ENCODE measurements at regions of chr14 and their contacts with region 1.

Region 1: DNA sequence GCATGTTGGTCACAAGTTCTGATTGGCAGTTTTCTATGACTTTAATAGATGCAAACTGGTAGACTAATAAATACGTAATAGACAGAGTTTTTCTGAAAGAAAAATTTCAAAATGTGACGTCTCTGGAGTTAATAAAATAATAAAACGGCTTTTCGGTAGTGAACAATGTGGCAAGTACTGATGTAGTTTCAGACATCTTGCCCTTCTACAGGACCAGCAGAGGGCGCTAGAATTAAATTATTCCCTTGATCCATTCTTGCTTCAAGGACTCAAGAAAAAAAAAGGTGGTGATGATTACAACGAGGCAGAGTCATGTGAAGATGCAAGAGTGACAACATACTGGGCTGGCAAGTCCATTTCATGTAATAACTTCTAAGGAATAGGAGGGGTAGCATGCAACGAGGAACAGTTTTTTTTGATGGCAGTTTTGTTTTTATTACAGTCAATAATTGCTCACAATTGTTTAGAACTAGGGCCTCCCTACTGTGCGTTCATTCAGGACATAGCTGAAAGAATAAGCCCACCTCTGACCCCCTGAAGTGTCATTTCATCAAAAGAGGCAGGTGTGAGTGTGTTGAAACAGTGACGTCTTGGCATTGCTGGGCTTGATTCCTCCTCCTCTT is 101.0 kb upstream of the GZMB start:
- DNase-seq: peak; percentile 83
- H3K4me3 ChIP-seq: no peak overlapping the region
- H3K27ac ChIP-seq: no peak overlapping the region
- H3K4me1 ChIP-seq: no peaks in the 10 kb centered on the region
- H3K27me3 ChIP-seq: no peaks in the 10 kb centered on the region
- CTCF ChIP-seq: peak; percentile 87

Region 2: DNA sequence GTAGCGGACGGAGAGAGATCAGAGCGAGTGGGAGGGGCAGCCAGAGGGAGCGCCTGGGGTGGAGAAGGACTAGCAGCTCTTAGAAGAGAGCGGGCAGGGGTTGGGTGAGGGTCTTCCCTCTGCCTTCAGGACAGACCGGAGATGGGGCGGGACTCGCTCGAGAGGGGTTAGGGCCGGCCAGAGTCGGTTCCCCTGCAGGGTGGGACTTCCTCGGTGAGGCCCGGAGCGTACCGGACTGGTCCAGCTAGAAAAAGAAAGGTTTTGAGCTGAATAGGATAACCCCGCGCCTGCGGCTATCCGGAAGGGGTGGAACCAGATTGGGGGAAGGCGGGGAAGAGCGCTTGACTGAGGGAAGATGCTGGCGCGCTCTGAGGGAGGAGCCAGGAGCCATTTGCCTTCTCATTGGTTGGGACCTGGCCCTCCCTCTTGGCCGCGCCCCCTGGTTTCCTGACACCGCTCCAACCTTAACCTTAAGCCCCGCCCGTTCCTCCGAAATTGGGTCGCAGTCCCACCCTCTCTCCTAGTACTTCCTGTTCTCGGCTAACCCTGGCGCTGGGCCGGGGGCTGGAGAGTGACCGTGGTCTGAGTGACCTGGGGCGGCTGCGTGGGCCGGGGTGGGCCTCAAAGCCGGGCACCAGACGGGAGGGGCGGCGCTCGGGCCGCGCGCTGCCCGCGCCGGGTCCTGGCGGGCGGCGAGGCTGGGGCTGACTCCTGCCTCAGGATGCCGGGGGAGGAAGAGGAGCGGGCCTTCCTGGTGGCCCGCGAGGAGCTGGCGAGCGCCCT is 587.8 kb before region 1 on chr14 and contains the start of gene RNF31:
- CTCF ChIA-PET with region 1: no interaction called
- POLR2A ChIA-PET with region 1: no interaction called
- intact Hi-C with region 1: no loop called
- DNase-seq: peak; percentile 99
- H3K4me3 ChIP-seq: peak within 1 kb of the TSS; percentile 90
- H3K27ac ChIP-seq: peak within 1 kb of the TSS; percentile 87
- H3K4me1 ChIP-seq: peaks cover 12% of the 10 kb centered on the region
- H3K27me3 ChIP-seq: no peaks in the 10 kb centered on the region
- CTCF ChIP-seq: no peak
- total RNA-seq, gene RNF31: 59.9 and 62.1 TPM in 2 replicates

Region 3: DNA sequence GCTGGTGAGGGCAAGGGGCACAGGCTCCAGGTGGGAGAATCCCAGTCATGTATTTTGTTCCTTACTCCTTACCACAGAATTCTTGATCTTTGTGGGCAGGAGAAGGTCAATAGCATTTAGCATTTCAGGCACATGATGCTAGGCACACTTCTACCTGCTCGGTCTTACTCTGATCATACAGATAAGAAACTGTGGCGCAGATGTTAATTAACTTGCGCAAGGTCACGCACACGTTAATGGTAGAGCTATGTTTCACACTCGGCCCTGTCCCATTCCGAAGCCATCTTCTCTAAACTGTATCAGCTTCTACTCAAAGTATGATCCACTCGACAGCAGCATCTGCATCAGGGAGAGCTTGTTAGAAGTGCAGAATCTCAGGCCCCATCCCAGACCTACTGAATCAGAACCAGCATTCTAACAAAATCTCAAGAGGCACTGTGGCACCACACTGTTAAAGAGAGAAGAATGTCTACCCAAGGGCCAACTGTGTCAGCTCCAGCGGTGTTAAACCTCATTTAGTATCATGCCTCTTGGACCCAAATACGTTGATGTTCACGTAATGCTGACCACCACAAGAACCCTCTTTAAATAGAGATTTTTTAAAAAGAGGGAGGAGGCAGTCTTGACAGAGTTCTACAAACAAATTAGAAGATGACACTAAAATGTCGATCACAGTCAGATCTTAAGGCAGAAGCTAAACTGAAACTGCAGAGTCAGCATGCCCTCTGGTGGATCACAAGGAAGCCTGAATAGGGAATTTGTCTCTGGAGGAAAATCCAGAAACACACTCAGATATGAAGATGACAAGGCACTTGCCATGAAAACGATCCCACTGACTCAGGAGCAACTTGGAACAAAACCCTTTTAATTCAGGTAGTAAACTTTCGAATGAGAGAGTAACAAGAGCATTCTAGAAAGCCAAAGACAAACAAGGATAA is 307.6 kb after region 1 on chr14:
- CTCF ChIA-PET with region 1: no interaction called
- POLR2A ChIA-PET with region 1: no interaction called
- intact Hi-C with region 1: loop called (anchors 5 kb)
- DNase-seq: peak; percentile 68
- H3K4me3 ChIP-seq: no peak overlapping the region
- H3K27ac ChIP-seq: no peak overlapping the region
- H3K4me1 ChIP-seq: no peaks in the 10 kb centered on the region
- H3K27me3 ChIP-seq: peaks cover 8% of the 10 kb centered on the region
- CTCF ChIP-seq: peak; percentile 64

Region 4: GRCh38 chr14:25132732-25133422 is 397.9 kb after region 1 on chr14:
- CTCF ChIA-PET with region 1: interaction called, 4 read pairs
- POLR2A ChIA-PET with region 1: no interaction called
- intact Hi-C with region 1: loop called (anchors 2 kb)
- DNase-seq: peak; percentile 75
- H3K4me3 ChIP-seq: no peak overlapping the region
- H3K27ac ChIP-seq: no peak overlapping the region
- H3K4me1 ChIP-seq: no peaks in the 10 kb centered on the region
- H3K27me3 ChIP-seq: peaks cover 7% of the 10 kb centered on the region
- CTCF ChIP-seq: peak; percentile 86

Region 5: DNA sequence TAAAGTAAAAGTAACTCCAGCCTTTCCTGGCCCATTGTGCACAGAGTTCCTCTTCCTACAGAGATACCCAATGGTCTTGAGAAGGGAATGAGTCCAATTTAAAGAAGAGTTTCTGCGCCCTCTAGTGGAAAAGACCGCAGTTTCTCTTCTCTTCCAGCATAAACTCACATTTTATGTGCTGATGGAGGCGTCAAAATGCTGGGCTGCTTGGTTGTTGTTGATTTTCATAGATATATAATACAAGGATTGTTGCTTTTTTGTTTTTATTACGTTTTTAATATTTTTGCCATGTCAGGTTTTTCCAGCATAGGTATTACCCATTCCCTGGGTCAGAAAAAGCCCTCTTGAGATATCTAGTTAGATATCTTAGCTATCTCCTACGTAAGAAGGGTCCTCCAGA is 671.8 kb after region 1 on chr14:
- CTCF ChIA-PET with region 1: no interaction called
- POLR2A ChIA-PET with region 1: no interaction called
- intact Hi-C with region 1: loop called (anchors 2 kb)
- DNase-seq: peak; percentile 83
- H3K4me3 ChIP-seq: no peak overlapping the region
- H3K27ac ChIP-seq: no peak overlapping the region
- H3K4me1 ChIP-seq: peaks cover 6% of the 10 kb centered on the region
- H3K27me3 ChIP-seq: peaks cover 8% of the 10 kb centered on the region
- CTCF ChIP-seq: peak; percentile 82